Activated CD4-positive, alpha-beta T cell treated with anti-CD3 and anti-CD28 coated beads for 36 hours (primary cell): ENCODE measurements at regions of chr6 and their contacts with region 1.

Region 1: DNA sequence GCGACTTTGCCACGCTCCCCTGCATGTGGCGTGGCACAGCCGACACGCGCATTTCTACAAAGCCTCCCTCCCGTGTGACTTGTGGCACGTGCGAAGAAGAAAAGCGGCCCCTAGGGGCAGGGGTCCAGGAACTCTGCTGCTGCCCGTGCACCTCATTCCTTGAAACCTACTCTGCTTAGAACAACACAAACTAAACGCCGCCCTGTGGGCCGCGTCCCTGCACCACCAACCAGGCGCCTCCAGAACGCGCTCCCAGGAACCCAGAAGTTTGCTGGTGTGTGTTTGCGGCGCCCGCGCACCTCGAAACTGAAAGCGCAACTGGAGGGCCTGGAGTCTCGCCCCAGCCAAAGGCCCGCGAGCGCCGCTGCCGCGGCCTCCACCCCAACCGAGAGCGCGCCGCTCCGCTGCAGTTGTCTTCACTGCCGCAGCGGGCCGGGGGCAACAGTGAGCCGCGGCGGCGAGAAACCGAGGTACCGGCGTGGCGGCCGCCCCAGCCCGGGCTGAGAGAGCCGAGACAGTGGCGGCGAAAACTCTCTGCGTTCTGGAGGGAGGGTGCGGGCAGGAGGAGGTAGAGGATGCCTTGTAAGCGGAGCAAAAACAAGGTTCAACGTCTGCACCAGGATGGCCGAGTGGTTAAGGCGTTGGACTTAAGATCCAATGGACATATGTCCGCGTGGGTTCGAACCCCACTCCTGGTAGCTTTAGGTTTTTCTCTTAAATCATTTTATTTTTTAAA is 65.8 kb downstream of the STX11 start:
- DNase-seq: peak; percentile 95
- ATAC-seq: peak; percentile 90
- H3K4me3 Mint-ChIP-seq: peak overlapping the region; percentile 81
- H3K27ac Mint-ChIP-seq: peak overlapping the region; percentile 99
- H3K4me1 Mint-ChIP-seq: peaks cover 41% of the 10 kb centered on the region
- H3K27me3 Mint-ChIP-seq: peaks cover 2% of the 10 kb centered on the region

Region 2: GRCh38 chr6:143575440-143575839 is 640.7 kb before region 1 on chr6:
- CTCF ChIA-PET with region 1: no interaction called
- POLR2A ChIA-PET with region 1: no interaction called
- intact Hi-C with region 1: loop called (anchors 5 kb)
- DNase-seq: peak; percentile 58
- ATAC-seq: peak; percentile 93
- H3K4me3 Mint-ChIP-seq: no peak overlapping the region
- H3K27ac Mint-ChIP-seq: no peak overlapping the region
- H3K4me1 Mint-ChIP-seq: no peaks in the 10 kb centered on the region
- H3K27me3 Mint-ChIP-seq: no peaks in the 10 kb centered on the region

Region 3: DNA sequence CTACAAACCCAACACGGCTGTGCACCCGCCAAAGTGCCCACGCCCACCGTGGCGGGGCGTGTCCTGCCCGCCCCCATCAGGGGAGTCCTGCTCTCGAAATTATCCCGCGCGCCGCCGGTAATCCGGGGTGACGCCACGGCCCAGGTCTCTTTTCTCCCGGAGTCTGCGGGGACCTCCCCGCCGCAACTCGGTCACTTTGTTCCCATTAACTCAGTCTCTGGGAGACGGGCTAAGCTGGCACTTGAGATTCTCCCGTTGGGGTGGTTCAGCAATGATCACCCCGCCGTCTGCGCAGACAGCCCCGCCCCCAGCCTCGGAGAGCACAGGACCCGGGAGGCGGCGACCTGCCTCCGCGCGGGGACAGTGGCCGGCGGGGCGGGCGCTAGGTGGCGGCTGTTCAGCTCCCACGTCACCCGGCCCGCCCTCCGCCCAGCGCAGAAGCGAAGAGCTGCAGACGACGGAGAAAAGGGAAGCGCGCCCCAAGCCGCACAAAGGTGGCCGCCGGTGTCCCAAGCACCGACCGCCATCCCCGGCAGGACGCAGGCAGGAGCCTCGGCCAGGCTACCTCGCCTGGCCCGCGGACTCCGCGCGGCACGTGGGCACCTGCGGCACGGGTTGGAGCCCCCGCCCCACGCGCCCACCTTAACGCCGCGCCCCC is 152.2 kb before region 1 on chr6:
- CTCF ChIA-PET with region 1: interaction called, 10 read pairs
- POLR2A ChIA-PET with region 1: no interaction called
- intact Hi-C with region 1: loop called in 1 of 2 experiments (anchors 1 kb)
- DNase-seq: peak; percentile 93
- ATAC-seq: peak; percentile 90
- H3K4me3 Mint-ChIP-seq: peak overlapping the region; percentile 81
- H3K27ac Mint-ChIP-seq: peak overlapping the region; percentile 80
- H3K4me1 Mint-ChIP-seq: peaks cover 46% of the 10 kb centered on the region
- H3K27me3 Mint-ChIP-seq: peaks cover 11% of the 10 kb centered on the region

Region 4: GRCh38 chr6:144131248-144131709 is 84.8 kb before region 1 on chr6:
- CTCF ChIA-PET with region 1: interaction called, 9 read pairs
- POLR2A ChIA-PET with region 1: interaction called, 4 read pairs
- intact Hi-C with region 1: loop called (anchors 1 kb)
- DNase-seq: no peak
- ATAC-seq: peak; percentile 94
- H3K4me3 Mint-ChIP-seq: peak overlapping the region; percentile 47
- H3K27ac Mint-ChIP-seq: peak overlapping the region; percentile 91
- H3K4me1 Mint-ChIP-seq: peaks cover 38% of the 10 kb centered on the region
- H3K27me3 Mint-ChIP-seq: peaks cover 2% of the 10 kb centered on the region

Region 5: GRCh38 chr6:144248476-144249301 is 32.6 kb after region 1 on chr6:
- CTCF ChIA-PET with region 1: interaction called, 3 read pairs
- POLR2A ChIA-PET with region 1: no interaction called
- intact Hi-C with region 1: loop called in 1 of 2 experiments (anchors 1 kb)
- DNase-seq: peak; percentile 11
- ATAC-seq: peak; percentile 57
- H3K4me3 Mint-ChIP-seq: no peak overlapping the region
- H3K27ac Mint-ChIP-seq: peak overlapping the region; percentile 17
- H3K4me1 Mint-ChIP-seq: peaks cover 17% of the 10 kb centered on the region
- H3K27me3 Mint-ChIP-seq: peaks cover 12% of the 10 kb centered on the region

Region 6: DNA sequence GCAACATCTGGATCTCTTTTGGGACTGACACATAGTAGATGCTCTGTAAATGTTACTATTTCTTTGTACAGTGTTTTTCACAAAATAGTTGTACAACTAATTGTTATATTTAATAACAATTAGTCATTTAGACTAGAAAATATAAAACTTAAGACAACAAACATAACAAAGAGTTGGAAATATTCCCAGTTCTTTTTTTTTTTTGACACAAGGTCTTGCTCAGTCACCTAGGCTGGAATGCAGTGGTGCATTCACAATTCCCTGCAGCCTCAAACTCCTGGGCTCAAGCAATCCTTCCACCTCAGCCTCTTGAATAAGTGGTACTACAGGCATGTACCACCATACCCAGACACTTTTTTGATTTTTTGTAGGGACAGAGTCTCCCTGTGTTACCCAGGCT is 174.8 kb after region 1 on chr6:
- CTCF ChIA-PET with region 1: no interaction called
- POLR2A ChIA-PET with region 1: no interaction called
- intact Hi-C with region 1: no loop called
- DNase-seq: no peak
- ATAC-seq: no peak
- H3K4me3 Mint-ChIP-seq: no peak overlapping the region
- H3K27ac Mint-ChIP-seq: no peak overlapping the region
- H3K4me1 Mint-ChIP-seq: peaks cover 38% of the 10 kb centered on the region
- H3K27me3 Mint-ChIP-seq: no peaks in the 10 kb centered on the region

Region 7: GRCh38 chr6:144482142-144482541 is 266.0 kb after region 1 on chr6:
- CTCF ChIA-PET with region 1: interaction called, 8 read pairs
- POLR2A ChIA-PET with region 1: no interaction called
- intact Hi-C with region 1: loop called (anchors 1 to 5 kb)
- DNase-seq: peak; percentile 84
- ATAC-seq: peak; percentile 90
- H3K4me3 Mint-ChIP-seq: no peak overlapping the region
- H3K27ac Mint-ChIP-seq: no peak overlapping the region
- H3K4me1 Mint-ChIP-seq: peaks cover 6% of the 10 kb centered on the region
- H3K27me3 Mint-ChIP-seq: no peaks in the 10 kb centered on the region